Activated T-helper 2 cell treated with anti-CD3 and anti-CD28 coated beads, Interferon-gamma antibody, Interleukin-2, Interleukin-4, amounts not matched to agents 10 μg/mL and 5 μg/mL and 100 μg/mL, durations not matched to agents 14 hours and 24 hours and 36 hours (primary cell): ENCODE measurements at regions of chr19 and their contacts with region 1.

Region 1: DNA sequence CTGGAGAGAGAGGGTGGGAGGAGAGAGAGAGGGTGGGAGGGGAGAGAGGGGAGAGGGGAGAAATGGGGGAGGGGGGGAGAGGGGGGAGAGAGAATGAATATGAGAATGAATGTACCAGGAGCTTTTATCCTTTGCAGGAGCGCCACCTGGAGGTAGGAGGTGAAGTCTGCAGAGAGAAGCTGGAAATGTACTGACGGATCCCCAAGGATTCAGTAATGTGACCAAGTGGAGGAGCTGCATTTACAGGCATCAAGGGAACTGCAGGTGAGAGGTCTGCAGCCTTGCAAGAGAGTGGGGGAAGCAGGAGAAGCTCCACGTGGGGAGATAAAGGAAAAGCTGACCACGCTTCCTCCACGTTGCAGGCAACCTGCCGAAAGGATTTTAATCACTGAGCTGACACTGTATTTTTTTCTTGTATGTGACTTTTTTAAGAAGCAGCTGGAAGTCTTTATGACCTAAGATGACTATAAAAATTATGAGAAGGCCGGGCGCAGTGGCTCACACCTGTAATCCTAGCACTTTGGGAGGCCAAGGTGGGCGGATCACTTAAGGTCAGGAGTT is 33.7 kb downstream of the VSTM1 start:
- DNase-seq: peak; percentile 31
- H3K4me3 Mint-ChIP-seq: no peak overlapping the region
- H3K27ac Mint-ChIP-seq: no peak overlapping the region
- H3K4me1 Mint-ChIP-seq: peaks cover 2% of the 10 kb centered on the region
- H3K27me3 Mint-ChIP-seq: peaks cover 4% of the 10 kb centered on the region

Region 2: DNA sequence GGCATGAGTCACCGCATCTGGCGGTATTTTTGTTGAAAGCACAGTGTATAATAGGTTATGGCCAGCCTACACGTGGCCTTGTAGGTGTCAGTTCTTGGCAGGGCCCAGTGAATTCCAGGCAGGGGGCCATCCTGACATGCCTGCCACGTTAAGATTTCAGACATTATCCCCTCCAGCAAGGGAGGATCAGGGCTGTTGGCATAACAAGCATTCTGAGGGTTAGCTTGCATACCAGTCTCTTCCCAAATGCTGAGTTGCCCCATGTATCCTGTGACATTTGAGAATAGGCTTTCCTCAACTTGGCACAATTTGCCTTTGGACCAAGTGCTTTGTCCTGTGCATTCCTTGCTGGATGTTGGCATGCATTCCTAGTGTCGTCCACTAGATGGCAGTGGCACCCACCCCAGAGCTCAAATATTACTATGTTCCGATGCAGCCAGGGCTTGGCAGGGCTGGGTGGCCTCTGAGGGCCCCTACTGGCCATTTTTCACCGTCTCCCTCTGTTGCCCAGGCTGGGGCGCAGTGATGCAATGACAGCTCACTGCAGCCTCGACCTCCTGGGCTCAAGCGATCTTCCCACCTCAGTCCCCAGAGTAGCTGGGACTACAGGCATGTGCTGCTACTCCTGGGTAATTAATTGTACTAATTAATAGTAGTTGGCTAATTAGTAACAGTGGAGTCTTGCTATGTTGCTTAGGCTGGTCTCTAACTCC is 237.1 kb before region 1 on chr19:
- intact Hi-C with region 1: loop called (anchors 5 kb)
- DNase-seq: peak; percentile 71
- H3K4me3 Mint-ChIP-seq: no peak overlapping the region
- H3K27ac Mint-ChIP-seq: no peak overlapping the region
- H3K4me1 Mint-ChIP-seq: no peaks in the 10 kb centered on the region
- H3K27me3 Mint-ChIP-seq: no peaks in the 10 kb centered on the region

Region 3: DNA sequence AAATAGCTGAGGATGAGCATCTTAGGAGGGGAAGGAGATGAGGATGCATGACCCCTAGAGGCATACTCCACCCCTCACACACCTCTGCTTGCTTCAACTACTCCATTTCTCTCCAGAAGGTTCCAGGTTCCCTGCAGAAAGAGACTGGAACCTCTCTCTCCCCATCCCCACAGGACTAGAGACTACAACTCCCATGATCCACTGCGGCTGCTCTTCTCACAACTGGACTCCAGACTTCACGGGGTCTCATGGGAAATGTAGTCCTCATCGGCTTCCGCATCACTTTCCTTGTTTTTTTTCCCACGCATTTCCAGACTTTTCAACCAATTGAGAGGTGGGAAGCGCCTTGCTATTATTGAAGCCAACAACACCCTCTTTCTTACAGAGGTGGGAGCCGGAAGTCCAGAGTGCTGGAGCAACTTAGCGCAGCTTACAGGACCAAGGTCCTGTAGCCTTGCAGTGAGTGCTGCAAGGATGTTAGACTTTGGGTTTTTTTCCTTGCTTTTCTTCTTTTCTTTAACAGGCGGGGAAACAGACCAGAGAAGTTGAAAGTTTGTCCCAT is 52.5 kb before region 1 on chr19:
- intact Hi-C with region 1: loop called (anchors 10 kb)
- DNase-seq: peak; percentile 36
- H3K4me3 Mint-ChIP-seq: peak overlapping the region; percentile 40
- H3K27ac Mint-ChIP-seq: no peak overlapping the region
- H3K4me1 Mint-ChIP-seq: peaks cover 11% of the 10 kb centered on the region
- H3K27me3 Mint-ChIP-seq: peaks cover 44% of the 10 kb centered on the region

Region 4: DNA sequence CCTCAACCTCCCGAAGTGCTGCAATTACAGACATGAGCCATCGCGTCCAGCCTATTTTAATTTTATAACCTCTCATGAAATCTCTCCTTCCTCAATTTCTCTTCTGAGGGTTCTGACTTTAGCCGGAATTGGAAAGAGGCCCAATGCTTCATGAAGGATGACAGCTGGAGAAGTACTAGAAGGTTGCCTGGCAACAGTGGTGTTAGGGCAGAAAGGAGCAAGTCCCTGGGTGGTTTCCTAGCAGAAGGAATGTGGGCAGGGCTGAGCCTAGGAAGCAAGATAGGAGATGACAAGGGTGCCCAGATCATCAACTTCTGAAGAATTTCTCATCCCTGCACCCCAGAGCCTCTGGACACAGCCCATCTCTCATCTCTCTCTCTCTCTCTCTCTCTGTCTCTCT is 12.7 kb before region 1 on chr19:
- intact Hi-C with region 1: no loop called
- DNase-seq: no peak
- H3K4me3 Mint-ChIP-seq: no peak overlapping the region
- H3K27ac Mint-ChIP-seq: no peak overlapping the region
- H3K4me1 Mint-ChIP-seq: peaks cover 14% of the 10 kb centered on the region
- H3K27me3 Mint-ChIP-seq: peaks cover 4% of the 10 kb centered on the region

Region 5: GRCh38 chr19:54047616-54048015 is 17.6 kb after region 1 on chr19:
- intact Hi-C with region 1: no loop called
- DNase-seq: no peak
- H3K4me3 Mint-ChIP-seq: no peak overlapping the region
- H3K27ac Mint-ChIP-seq: no peak overlapping the region
- H3K4me1 Mint-ChIP-seq: no peaks in the 10 kb centered on the region
- H3K27me3 Mint-ChIP-seq: no peaks in the 10 kb centered on the region